ENCODE measurements at regions of chr13 and their contacts with region 1.

Region 1: DNA sequence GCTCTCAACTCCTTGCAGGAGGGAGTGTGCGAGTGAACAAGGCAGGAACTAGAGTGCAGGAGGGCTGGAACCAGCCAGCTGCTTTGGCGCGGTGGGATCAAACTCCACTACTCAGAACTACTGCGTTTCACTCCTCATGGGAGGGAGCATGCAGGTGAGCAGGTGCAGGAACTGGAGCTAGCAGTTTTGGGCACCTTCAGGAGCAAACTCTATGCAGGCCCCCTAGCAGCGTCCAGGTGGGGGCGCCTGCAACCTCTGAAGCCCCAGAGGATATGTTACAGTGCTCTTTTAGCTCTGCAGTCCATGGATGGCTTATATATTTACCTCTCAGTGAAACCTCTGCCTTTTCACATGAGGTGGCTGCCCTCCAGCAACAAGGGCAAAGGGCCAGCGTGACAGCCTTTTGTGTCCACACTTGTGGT is 1303.4 kb downstream of the PCDH9 start:
- DNase-seq: peak; percentile 85
- ATAC-seq: peak; percentile 82
- H3K4me3 ChIP-seq: peak overlapping the region; percentile 51
- H3K27ac ChIP-seq: peak overlapping the region; percentile 42
- H3K4me1 ChIP-seq: peaks cover 39% of the 10 kb centered on the region
- H3K27me3 ChIP-seq: no peaks in the 10 kb centered on the region
- CTCF ChIP-seq: peak; percentile 69

Region 2: GRCh38 chr13:65656740-65657329 is 269.9 kb before region 1 on chr13:
- CTCF ChIA-PET with region 1: interaction called, 4 read pairs
- POLR2A ChIA-PET with region 1: no interaction called
- intact Hi-C with region 1: loop called (anchors 5 kb)
- DNase-seq: peak; percentile 37
- ATAC-seq: no peak
- H3K4me3 ChIP-seq: no peak overlapping the region
- H3K27ac ChIP-seq: no peak overlapping the region
- H3K4me1 ChIP-seq: no peaks in the 10 kb centered on the region
- H3K27me3 ChIP-seq: no peaks in the 10 kb centered on the region
- CTCF ChIP-seq: peak; percentile 65

Region 3: GRCh38 chr13:65913173-65913572 is 13.6 kb before region 1 on chr13:
- CTCF ChIA-PET with region 1: no interaction called
- POLR2A ChIA-PET with region 1: no interaction called
- intact Hi-C with region 1: loop called (anchors 1 kb)
- DNase-seq: peak; percentile 83
- ATAC-seq: peak; percentile 86
- H3K4me3 ChIP-seq: no peak overlapping the region
- H3K27ac ChIP-seq: peak overlapping the region; percentile 68
- H3K4me1 ChIP-seq: peaks cover 39% of the 10 kb centered on the region
- H3K27me3 ChIP-seq: no peaks in the 10 kb centered on the region
- CTCF ChIP-seq: no peak

Region 4: GRCh38 chr13:66200555-66200954 is 273.8 kb after region 1 on chr13:
- CTCF ChIA-PET with region 1: no interaction called
- POLR2A ChIA-PET with region 1: no interaction called
- intact Hi-C with region 1: loop called (anchors 2 kb)
- DNase-seq: no peak
- ATAC-seq: peak; percentile 43
- H3K4me3 ChIP-seq: no peak overlapping the region
- H3K27ac ChIP-seq: no peak overlapping the region
- H3K4me1 ChIP-seq: no peaks in the 10 kb centered on the region
- H3K27me3 ChIP-seq: no peaks in the 10 kb centered on the region
- CTCF ChIP-seq: 0 out of 2 replicates have a peak, but pooled peaks have one; percentile 15

Region 5: DNA sequence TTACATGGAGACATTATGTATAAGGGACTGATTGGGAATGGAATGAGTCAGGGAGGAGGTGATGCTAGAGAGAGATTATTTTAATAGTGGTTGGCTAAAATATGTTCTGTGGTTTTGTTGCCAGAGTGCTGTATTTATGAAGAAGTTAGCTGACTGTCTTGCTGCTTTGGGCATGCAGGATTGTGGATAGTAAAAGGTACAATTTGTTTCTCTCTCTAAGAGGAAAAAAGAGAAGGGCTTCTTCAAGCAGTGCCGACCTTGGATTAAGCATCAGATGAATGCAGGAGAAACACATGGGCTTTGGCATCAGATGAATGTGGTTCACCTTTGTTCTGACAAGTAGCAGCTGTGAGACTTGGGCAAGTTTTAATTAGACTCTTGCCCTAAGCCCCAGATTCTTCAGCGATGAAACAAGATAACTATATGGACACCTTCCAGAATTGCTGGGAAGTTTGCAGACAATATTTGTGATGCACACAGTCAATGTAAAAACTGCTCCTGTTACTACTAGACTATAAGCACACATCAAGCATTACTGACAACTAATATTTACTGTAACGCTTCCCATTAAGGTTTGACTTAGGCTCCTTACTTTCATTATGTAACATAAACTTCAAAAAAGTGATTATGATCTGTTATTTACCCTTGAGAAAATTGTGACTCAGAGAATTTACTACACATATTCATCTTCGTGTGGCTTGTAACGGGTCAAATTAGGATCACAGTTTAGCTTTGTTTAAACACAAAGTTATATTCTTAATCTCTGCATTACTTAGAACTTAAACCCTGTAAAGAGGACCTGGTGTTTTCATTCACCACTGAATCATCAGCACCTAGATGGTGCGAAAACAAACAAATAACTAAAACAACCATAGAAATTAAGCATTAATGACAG is 479.4 kb after region 1 on chr13:
- CTCF ChIA-PET with region 1: no interaction called
- POLR2A ChIA-PET with region 1: no interaction called
- intact Hi-C with region 1: loop called (anchors 5 kb)
- DNase-seq: peak; percentile 58
- ATAC-seq: peak; percentile 67
- H3K4me3 ChIP-seq: peak overlapping the region; percentile 15
- H3K27ac ChIP-seq: peak overlapping the region; percentile 86
- H3K4me1 ChIP-seq: peaks cover 51% of the 10 kb centered on the region
- H3K27me3 ChIP-seq: no peaks in the 10 kb centered on the region
- CTCF ChIP-seq: no peak

Region 6: GRCh38 chr13:67230404-67231288 is 1303.9 kb after region 1 on chr13:
- CTCF ChIA-PET with region 1: no interaction called
- POLR2A ChIA-PET with region 1: no interaction called
- intact Hi-C with region 1: loop called (anchors 5 kb)
- DNase-seq: peak; percentile 89
- ATAC-seq: peak; percentile 83
- H3K4me3 ChIP-seq: peak overlapping the region; percentile 88
- H3K27ac ChIP-seq: no peak overlapping the region; the same call in 1 of the 2 replicates
- H3K4me1 ChIP-seq: 0 out of 2 replicates have a peak, but pooled peaks cover 3% of the 10 kb centered on the region
- H3K27me3 ChIP-seq: no peaks in the 10 kb centered on the region
- CTCF ChIP-seq: no peak

Measured in PC-3 (cell line).